HepG2 (cell line): ENCODE measurements at regions of chr7 and their contacts with region 1.

Region 1: DNA sequence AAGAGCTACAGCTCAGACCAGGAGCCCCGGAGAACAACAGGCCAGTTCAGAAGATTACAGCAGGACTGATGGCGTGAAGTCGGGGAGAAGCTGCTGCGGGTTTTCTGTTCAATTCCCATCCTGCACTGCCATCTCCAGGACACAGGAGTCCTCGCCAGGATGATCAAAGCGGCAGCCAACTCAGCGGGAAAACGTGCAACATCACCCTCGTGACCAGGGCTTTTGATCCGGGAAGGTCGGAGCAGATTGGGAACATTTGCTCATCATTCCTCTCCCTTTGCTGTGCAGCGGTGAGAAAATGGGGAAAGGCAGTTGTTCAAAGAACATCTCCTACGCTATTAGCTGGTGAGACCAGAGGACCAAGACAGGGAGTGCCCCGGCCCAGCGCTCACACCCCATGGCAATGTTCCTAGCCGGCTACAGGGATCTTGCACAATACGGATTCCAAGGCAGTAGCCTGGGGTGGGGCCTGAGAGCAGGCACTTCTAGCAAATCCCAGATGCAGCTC is 50.4 kb upstream of the FOXK1 start:
- DNase-seq: peak; percentile 84
- ATAC-seq: peak; percentile 95
- H3K4me3 ChIP-seq: peak overlapping the region; percentile 14 to 53 (median 31); a peak in 3 of 6 replicates
- H3K27ac ChIP-seq: no peak overlapping the region
- H3K4me1 ChIP-seq: peaks cover 16% of the 10 kb centered on the region
- H3K27me3 ChIP-seq: no peaks in the 10 kb centered on the region
- CTCF ChIP-seq: peak; percentile 93
- EP300 ChIP-seq: no peak
- POLR2A ChIP-seq: no peak
- RAD21 ChIP-seq: peak; percentile 84

Region 2: GRCh38 chr7:4361757-4362156 is 270.0 kb before region 1 on chr7:
- CTCF ChIA-PET with region 1: no interaction called
- POLR2A ChIA-PET with region 1: no interaction called
- in situ Hi-C with region 1: no loop called
- intact Hi-C with region 1: no loop called
- DNase-seq: peak; percentile 7
- ATAC-seq: peak; percentile 87
- H3K4me3 ChIP-seq: no peak overlapping the region
- H3K27ac ChIP-seq: no peak overlapping the region
- H3K4me1 ChIP-seq: no peaks in the 10 kb centered on the region
- H3K27me3 ChIP-seq: peaks cover 0 to 1% of the 10 kb centered on the region in 2 experiments; a peak in 1 of 5 replicates
- CTCF ChIP-seq: 0 out of 2 replicates have a peak, but pooled peaks have one; percentile 5
- EP300 ChIP-seq: no peak
- POLR2A ChIP-seq: no peak
- RAD21 ChIP-seq: no peak

Region 3: DNA sequence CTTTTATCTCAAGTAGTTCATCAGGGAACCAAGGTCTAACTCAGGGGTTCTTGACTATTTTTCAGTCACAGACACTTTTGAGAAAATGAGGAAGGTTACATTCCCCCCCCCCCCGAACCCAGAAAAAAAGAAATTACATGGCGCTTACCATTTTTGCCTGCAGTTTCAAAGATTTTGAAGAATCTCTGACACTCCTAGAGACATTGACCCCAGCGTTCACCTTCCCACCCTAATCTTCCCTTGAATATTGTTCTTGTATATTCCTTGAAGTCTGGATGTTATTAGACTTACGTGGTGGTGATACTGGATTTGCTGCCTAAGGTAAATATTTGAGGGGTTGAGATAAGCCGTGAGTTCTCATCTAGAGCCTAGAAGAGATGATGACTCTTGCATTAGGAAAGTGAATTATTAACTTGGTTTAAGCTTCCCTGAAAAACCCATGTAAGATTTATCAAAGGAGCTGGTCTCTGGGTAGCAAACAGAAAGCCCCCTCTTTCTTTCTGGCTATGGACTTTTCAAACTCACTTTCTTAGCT is 195.3 kb before region 1 on chr7:
- CTCF ChIA-PET with region 1: no interaction called
- POLR2A ChIA-PET with region 1: no interaction called
- in situ Hi-C with region 1: no loop called
- intact Hi-C with region 1: loop called (anchors 5 kb)
- DNase-seq: peak; percentile 57
- ATAC-seq: peak; percentile 69
- H3K4me3 ChIP-seq: no peak overlapping the region
- H3K27ac ChIP-seq: no peak overlapping the region
- H3K4me1 ChIP-seq: peaks cover 18% of the 10 kb centered on the region
- H3K27me3 ChIP-seq: peaks cover 3 to 26% of the 10 kb centered on the region in 2 experiments; a peak in 2 of 5 replicates
- CTCF ChIP-seq: no peak
- EP300 ChIP-seq: peak in 1 of 2 experiments; percentile 47; a peak in 1 of 4 replicates
- POLR2A ChIP-seq: no peak
- RAD21 ChIP-seq: no peak

Region 4: DNA sequence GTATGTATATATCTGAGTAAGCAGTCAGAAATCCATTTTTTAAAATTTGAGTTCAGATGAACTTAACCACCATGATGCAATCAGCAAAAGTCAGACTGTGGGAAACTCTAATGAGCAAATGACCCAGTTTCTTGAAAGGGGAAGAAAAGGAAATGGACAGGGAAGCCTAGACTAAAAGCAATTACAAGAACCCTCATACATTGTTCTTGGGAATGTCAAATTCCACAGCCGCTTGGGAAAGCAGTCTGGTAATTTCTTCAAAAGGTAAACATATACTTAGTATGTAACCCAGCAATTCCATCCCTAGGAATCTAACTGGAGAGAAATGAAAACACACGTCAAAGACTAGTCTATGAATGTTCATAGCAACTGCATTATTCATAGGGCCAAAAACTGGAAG is 33.9 kb after region 1 on chr7:
- CTCF ChIA-PET with region 1: no interaction called
- POLR2A ChIA-PET with region 1: no interaction called
- in situ Hi-C with region 1: no loop called
- intact Hi-C with region 1: no loop called
- DNase-seq: no peak
- ATAC-seq: no peak
- H3K4me3 ChIP-seq: no peak overlapping the region
- H3K27ac ChIP-seq: no peak overlapping the region
- H3K4me1 ChIP-seq: peaks cover 13% of the 10 kb centered on the region
- H3K27me3 ChIP-seq: no peaks in the 10 kb centered on the region
- CTCF ChIP-seq: no peak
- EP300 ChIP-seq: no peak
- POLR2A ChIP-seq: no peak
- RAD21 ChIP-seq: no peak